ENCODE measurements at regions of chr1 and their contacts with region 1.

Region 1: DNA sequence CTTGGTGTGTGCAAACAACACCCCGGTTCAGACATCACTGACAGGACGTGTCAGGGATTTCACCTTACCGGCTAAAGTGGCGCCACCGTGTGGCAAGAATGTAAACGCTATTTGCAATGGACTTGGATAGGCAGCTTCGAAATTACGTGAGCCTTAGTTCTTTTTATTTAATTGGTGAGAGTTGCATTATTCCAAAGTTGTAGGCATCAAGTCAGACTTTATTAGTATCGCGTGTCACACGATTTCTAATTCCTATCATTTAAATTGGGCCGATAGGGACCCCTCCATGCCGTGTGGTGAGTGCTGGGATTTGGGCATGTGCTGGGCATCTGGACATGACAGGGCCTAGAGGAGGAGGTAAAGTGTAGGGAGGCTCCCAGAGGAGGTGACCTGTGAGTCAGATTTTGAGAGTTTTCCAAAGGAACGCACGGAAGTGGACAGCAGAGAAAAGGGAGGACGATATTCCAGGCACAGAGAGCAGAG is 14.5 kb upstream of the CPT2 start:
- DNase-seq: peak; percentile 79 to 91
- ATAC-seq: peak; percentile 84 to 94 (median 93)
- H3K4me3 ChIP-seq: no peak overlapping the region
- H3K4me3 Mint-ChIP-seq: no peak overlapping the region
- H3K27ac ChIP-seq: no peak overlapping the region
- H3K27ac Mint-ChIP-seq: no peak overlapping the region
- H3K4me1 ChIP-seq: peaks cover 23% of the 10 kb centered on the region
- H3K4me1 Mint-ChIP-seq: peaks cover 0 to 9% of the 10 kb centered on the region in 2 donors
- H3K27me3 ChIP-seq: no peaks in the 10 kb centered on the region
- H3K27me3 Mint-ChIP-seq: no peaks in the 10 kb centered on the region
- CTCF ChIP-seq: peak; percentile 92

Region 2: GRCh38 chr1:52842643-52843309 is 339.4 kb before region 1 on chr1 and contains the start of gene ZYG11A:
- intact Hi-C with region 1: loop called (anchors 10 kb)
- DNase-seq: peak; percentile 55 to 83
- ATAC-seq: peak; percentile 96 to 98 (median 98)
- H3K4me3 ChIP-seq: peak within 1 kb of the TSS; percentile 6
- H3K4me3 Mint-ChIP-seq: peak within 1 kb of the TSS; percentile 77
- H3K27ac ChIP-seq: no peak within 1 kb of the TSS
- H3K27ac Mint-ChIP-seq: no peak within 1 kb of the TSS
- H3K4me1 ChIP-seq: peaks cover 12% of the 10 kb centered on the region
- H3K4me1 Mint-ChIP-seq: peaks cover 0 to 18% of the 10 kb centered on the region in 2 donors
- H3K27me3 ChIP-seq: peaks cover 19% of the 10 kb centered on the region
- H3K27me3 Mint-ChIP-seq: peaks cover 14 to 23% of the 10 kb centered on the region in 2 donors
- CTCF ChIP-seq: no peak
- total RNA-seq, gene ZYG11A: 0.58 TPM in 1 of 3 donors, not detected in the others

Region 3: GRCh38 chr1:53014791-53015507 is 167.2 kb before region 1 on chr1:
- intact Hi-C with region 1: loop called (anchors 2 kb)
- DNase-seq: peak; percentile 40 to 92
- ATAC-seq: peak; percentile 98 to 100 (median 99)
- H3K4me3 ChIP-seq: peak overlapping the region; percentile 56
- H3K4me3 Mint-ChIP-seq: peak overlapping the region; percentile 84
- H3K27ac ChIP-seq: peak overlapping the region; percentile 21
- H3K27ac Mint-ChIP-seq: peak overlapping the region; percentile 39 to 72
- H3K4me1 ChIP-seq: peaks cover 3% of the 10 kb centered on the region
- H3K4me1 Mint-ChIP-seq: peaks cover 27 to 29% of the 10 kb centered on the region in 2 donors
- H3K27me3 ChIP-seq: no peaks in the 10 kb centered on the region
- H3K27me3 Mint-ChIP-seq: no peaks in the 10 kb centered on the region
- CTCF ChIP-seq: no peak

Region 4: DNA sequence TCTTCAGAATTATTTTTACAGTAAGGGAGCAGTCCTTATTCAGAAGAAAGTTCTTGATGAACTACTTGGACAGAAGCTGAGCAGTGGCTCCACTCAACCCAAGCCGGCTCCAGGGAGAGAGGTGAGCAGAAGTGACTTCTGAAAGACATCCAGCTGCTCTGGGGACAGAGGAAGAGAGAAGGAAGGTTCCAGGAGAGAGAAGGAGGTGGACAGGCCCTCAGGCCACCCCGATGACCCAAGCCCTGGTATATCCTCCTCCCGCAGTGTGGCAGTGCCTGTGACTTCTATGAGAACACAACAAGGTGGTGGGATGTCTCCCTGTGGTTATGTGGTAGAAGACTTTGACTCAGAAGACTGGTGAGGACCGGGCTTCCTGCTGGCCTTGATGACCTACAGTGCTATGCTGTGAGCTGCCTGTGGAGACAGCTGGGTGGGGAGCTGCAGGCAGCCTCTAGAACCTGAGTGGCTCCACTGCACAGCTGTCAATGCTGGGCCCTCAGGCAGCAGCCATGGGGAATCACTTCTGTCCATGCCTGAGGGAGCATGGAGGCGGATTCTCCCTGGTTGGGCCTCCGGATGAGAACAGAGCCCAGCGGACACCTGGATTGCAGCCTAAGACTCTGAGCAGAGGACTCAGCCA is 54.7 kb before region 1 on chr1:
- intact Hi-C with region 1: loop called (anchors 1 kb)
- DNase-seq: peak; percentile 26 to 45
- ATAC-seq: peak; percentile 85 to 94 (median 86)
- H3K4me3 ChIP-seq: no peak overlapping the region
- H3K4me3 Mint-ChIP-seq: peak overlapping the region; percentile 78
- H3K27ac ChIP-seq: peak overlapping the region; percentile 77
- H3K27ac Mint-ChIP-seq: peak overlapping the region; percentile 87 to 94
- H3K4me1 ChIP-seq: peaks cover 68% of the 10 kb centered on the region
- H3K4me1 Mint-ChIP-seq: peaks cover 42 to 55% of the 10 kb centered on the region in 2 donors
- H3K27me3 ChIP-seq: no peaks in the 10 kb centered on the region
- H3K27me3 Mint-ChIP-seq: peaks cover 0 to 2% of the 10 kb centered on the region in 2 donors
- CTCF ChIP-seq: no peak

Region 5: DNA sequence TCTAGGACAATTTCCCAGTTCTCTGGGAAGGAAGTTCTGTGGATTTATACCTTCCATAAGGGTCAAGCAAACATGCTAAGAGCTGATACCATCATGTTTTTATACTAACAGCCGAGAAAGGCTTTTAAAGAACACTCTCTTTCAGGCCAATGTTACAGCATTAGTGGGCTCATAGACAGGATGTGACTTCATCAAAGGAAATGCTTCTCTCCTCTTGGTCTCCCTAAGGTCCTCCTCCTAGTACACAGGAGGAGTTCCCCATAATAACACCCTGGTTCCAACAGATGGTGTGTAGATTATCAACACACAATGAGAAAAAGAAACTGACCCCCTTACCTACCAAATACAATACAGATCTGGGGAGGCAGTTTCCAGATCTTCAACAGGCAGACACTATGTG is 583.5 kb after region 1 on chr1:
- intact Hi-C with region 1: no loop called
- DNase-seq: peak in 1 of 2 donors; percentile 61
- ATAC-seq: peak; percentile 89 to 97 (median 91)
- H3K4me3 ChIP-seq: no peak overlapping the region
- H3K4me3 Mint-ChIP-seq: peak overlapping the region; percentile 88
- H3K27ac ChIP-seq: peak overlapping the region; percentile 22
- H3K27ac Mint-ChIP-seq: peak overlapping the region; percentile 90 to 93
- H3K4me1 ChIP-seq: no peaks in the 10 kb centered on the region
- H3K4me1 Mint-ChIP-seq: peaks cover 22 to 25% of the 10 kb centered on the region in 2 donors
- H3K27me3 ChIP-seq: no peaks in the 10 kb centered on the region
- H3K27me3 Mint-ChIP-seq: no peaks in the 10 kb centered on the region
- CTCF ChIP-seq: no peak